Endothelial cell of umbilical vein (primary cell): ENCODE measurements at regions of chr1 and their contacts with region 1.

Region 1: GRCh38 chr1:154183045-154183915 is 8.6 kb downstream of the TPM3 start:
- DNase-seq: peak; percentile 95
- H3K4me3 ChIP-seq: peak overlapping the region; percentile 87 to 99 (median 93)
- H3K27ac ChIP-seq: peak overlapping the region; percentile 64
- H3K4me1 ChIP-seq: peaks cover 30% of the 10 kb centered on the region
- H3K27me3 ChIP-seq: peaks cover 0 to 3% of the 10 kb centered on the region in 2 experiments
- CTCF ChIP-seq: no peak
- POLR2A ChIP-seq: peak; percentile 72

Region 2: DNA sequence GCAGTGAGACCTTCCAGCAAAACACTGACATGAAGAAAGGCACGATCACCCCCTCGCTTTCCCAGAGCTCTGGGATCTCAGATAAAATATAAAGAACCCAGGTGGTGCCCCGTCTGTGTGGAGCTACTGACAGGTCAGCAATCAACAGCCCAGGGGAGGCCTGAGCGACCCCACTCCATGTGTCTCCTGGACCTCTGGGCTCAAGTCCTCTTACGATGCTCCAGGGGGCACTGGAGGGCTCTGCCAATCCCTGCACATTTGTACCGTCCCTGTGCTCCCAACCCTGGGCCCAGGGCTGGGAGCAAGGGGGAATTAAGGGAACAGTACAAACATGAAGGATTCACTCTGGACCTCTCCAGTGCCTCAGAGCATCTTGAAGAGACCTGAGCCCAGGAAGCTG is 754.5 kb before region 1 on chr1:
- CTCF ChIA-PET with region 1: no interaction called
- POLR2A ChIA-PET with region 1: no interaction called
- dilution Hi-C with region 1: no loop called
- intact Hi-C with region 1: no loop called
- DNase-seq: no peak
- H3K4me3 ChIP-seq: no peak overlapping the region
- H3K27ac ChIP-seq: no peak overlapping the region
- H3K4me1 ChIP-seq: no peaks in the 10 kb centered on the region
- H3K27me3 ChIP-seq: no peaks in the 10 kb centered on the region
- CTCF ChIP-seq: no peak
- POLR2A ChIP-seq: no peak

Region 3: GRCh38 chr1:154198756-154199562 is 15.7 kb after region 1 on chr1:
- CTCF ChIA-PET with region 1: interaction called, 12 read pairs
- POLR2A ChIA-PET with region 1: no interaction called
- dilution Hi-C with region 1: no loop called
- intact Hi-C with region 1: no loop called
- DNase-seq: peak; percentile 78
- H3K4me3 ChIP-seq: no peak overlapping the region
- H3K27ac ChIP-seq: no peak overlapping the region
- H3K4me1 ChIP-seq: no peaks in the 10 kb centered on the region
- H3K27me3 ChIP-seq: peaks cover 3 to 4% of the 10 kb centered on the region in 2 experiments
- CTCF ChIP-seq: peak; percentile 31 to 56
- POLR2A ChIP-seq: no peak

Region 4: GRCh38 chr1:154253671-154254070 is 70.4 kb after region 1 on chr1:
- CTCF ChIA-PET with region 1: no interaction called
- POLR2A ChIA-PET with region 1: interaction called, 13 read pairs
- dilution Hi-C with region 1: no loop called
- intact Hi-C with region 1: no loop called
- DNase-seq: no peak
- H3K4me3 ChIP-seq: no peak overlapping the region
- H3K27ac ChIP-seq: no peak overlapping the region
- H3K4me1 ChIP-seq: no peaks in the 10 kb centered on the region
- H3K27me3 ChIP-seq: no peaks in the 10 kb centered on the region
- CTCF ChIP-seq: no peak
- POLR2A ChIP-seq: no peak

Region 5: GRCh38 chr1:154272217-154272998 is 89.1 kb after region 1 on chr1 and contains the start of gene HAX1:
- CTCF ChIA-PET with region 1: interaction called, 3 read pairs
- POLR2A ChIA-PET with region 1: interaction called, 4 read pairs
- dilution Hi-C with region 1: no loop called
- intact Hi-C with region 1: loop called (anchors 1 kb)
- DNase-seq: peak; percentile 97
- H3K4me3 ChIP-seq: peak within 1 kb of the TSS; percentile 79 to 91 (median 81)
- H3K27ac ChIP-seq: peak within 1 kb of the TSS; percentile 69
- H3K4me1 ChIP-seq: peaks cover 15% of the 10 kb centered on the region
- H3K27me3 ChIP-seq: no peaks in the 10 kb centered on the region
- CTCF ChIP-seq: peak; percentile 81
- POLR2A ChIP-seq: peak; percentile 71
- total RNA-seq, gene HAX1: 69.1 and 78.4 TPM in 2 replicates

Region 6: DNA sequence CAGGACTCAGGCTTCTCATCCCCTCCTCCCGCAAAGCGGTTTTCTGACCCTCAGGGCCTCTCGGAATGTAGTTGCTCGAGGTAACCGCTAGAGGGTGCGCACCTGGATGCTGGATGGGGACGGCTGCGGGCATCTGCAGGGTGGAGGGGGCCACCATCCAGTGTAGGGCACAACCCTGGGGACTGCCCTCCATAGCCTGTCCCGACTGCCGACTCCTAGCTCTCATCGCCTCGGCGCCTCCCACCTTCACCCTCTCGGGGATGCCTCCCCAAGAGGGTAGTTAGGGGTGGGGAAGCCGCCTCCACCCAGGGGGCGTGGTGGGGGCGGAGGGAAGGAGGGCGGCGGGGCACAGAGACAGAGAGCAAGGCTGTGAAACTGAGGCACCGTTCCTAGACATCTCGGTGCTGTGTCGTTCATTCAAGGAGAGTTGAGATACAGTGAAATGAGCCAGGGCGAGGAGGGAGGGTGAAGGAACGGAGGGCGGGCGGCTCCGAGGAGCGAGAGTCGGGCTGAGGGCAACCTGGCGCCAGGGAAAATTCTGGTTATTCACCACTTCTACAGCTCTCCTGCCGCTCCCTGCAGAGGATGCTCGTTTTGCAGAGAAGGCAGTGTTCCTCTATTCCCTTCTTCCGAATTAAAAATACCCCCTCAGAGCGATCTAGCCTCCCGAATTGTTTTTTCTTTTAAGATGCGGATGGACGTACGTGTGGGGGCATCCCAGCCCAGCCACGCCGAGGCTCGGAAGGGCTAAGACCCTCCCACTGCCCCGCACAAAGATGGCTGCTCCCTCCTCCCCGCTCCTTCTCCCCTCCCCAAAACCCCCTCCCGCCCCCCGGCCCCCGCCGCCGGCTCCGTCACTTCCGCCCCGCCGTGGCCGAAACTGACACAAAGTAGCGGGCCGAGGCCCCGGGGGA is 141.6 kb after region 1 on chr1 and contains the start of gene ATP8B2:
- CTCF ChIA-PET with region 1: no interaction called
- POLR2A ChIA-PET with region 1: no interaction called
- dilution Hi-C with region 1: no loop called
- intact Hi-C with region 1: loop called (anchors 5 kb)
- DNase-seq: peak; percentile 79
- H3K4me3 ChIP-seq: peak within 1 kb of the TSS; percentile 78 to 88 (median 85)
- H3K27ac ChIP-seq: peak within 1 kb of the TSS; percentile 52
- H3K4me1 ChIP-seq: peaks cover 22% of the 10 kb centered on the region
- H3K27me3 ChIP-seq: peaks cover 0 to 8% of the 10 kb centered on the region in 2 experiments
- CTCF ChIP-seq: peak; percentile 93 to 94
- POLR2A ChIP-seq: no peak
- total RNA-seq, gene ATP8B2: 60.0 and 64.7 TPM in 2 replicates